Naive thymus-derived CD8-positive, alpha-beta T cell (primary cell): ENCODE measurements at regions of chr12 and their contacts with region 1.

Region 1: GRCh38 chr12:67648521-67649260 is at the start of gene DYRK2:
- DNase-seq: peak; percentile 68 to 89 (median 79)
- ATAC-seq: peak; percentile 51 to 55
- H3K4me3 Mint-ChIP-seq: peak within 1 kb of the TSS; percentile 88 to 99 (median 96)
- H3K27ac Mint-ChIP-seq: peak within 1 kb of the TSS; percentile 92 to 99 (median 98)
- H3K4me1 Mint-ChIP-seq: peaks cover 27 to 49% (median 37%) of the 10 kb centered on the region in 4 donors
- H3K27me3 Mint-ChIP-seq: no peaks in the 10 kb centered on the region
- polyA plus RNA-seq, gene DYRK2: 47.7 to 94.7 (median 62.4) TPM

Region 2: GRCh38 chr12:67355578-67356379 is 292.9 kb before region 1 on chr12:
- POLR2A ChIA-PET with region 1: interaction called, 20 read pairs
- DNase-seq: peak in 8 of 10 donors; percentile 5 to 64 (median 38)
- ATAC-seq: peak; percentile 69 to 85
- H3K4me3 Mint-ChIP-seq: peak overlapping the region in 3 of 10 donors; percentile 13 to 20 (median 15)
- H3K27ac Mint-ChIP-seq: peak overlapping the region in 1 of 10 donors; percentile 68
- H3K4me1 Mint-ChIP-seq: peaks cover 5 to 16% (median 12%) of the 10 kb centered on the region in 4 donors
- H3K27me3 Mint-ChIP-seq: no peaks in the 10 kb centered on the region

Region 3: GRCh38 chr12:67482751-67483671 is 165.7 kb before region 1 on chr12:
- POLR2A ChIA-PET with region 1: interaction called, 26 read pairs
- DNase-seq: peak; percentile 63 to 93 (median 80)
- ATAC-seq: peak; percentile 95
- H3K4me3 Mint-ChIP-seq: peak overlapping the region in 9 of 10 donors; percentile 31 to 57 (median 50)
- H3K27ac Mint-ChIP-seq: peak overlapping the region in 9 of 10 donors; percentile 62 to 96 (median 87)
- H3K4me1 Mint-ChIP-seq: peaks cover 24 to 42% (median 39%) of the 10 kb centered on the region in 4 donors
- H3K27me3 Mint-ChIP-seq: no peaks in the 10 kb centered on the region

Region 4: DNA sequence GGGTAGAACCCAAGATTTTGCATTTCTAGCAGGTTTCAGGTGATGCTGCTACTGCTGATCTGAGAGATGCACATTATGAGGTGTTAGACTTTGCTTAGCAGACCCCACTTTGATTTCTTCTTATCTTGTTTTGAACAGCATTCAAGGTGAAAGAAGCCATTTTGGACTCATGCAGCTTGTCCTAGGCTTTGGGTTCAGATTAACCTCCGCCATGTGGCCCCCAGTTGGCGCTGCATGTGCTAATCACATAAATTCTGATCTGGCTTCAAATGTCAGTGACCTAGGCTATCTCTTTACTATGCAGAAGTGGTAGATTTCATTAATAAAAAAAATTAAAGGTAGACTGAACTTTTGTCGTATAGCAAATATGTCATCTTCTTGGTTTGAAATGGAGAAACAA is 89.9 kb before region 1 on chr12:
- POLR2A ChIA-PET with region 1: interaction called, 23 read pairs
- DNase-seq: no peak
- ATAC-seq: no peak
- H3K4me3 Mint-ChIP-seq: no peak overlapping the region
- H3K27ac Mint-ChIP-seq: no peak overlapping the region
- H3K4me1 Mint-ChIP-seq: peaks cover 0 to 18% (median 8%) of the 10 kb centered on the region in 4 donors
- H3K27me3 Mint-ChIP-seq: no peaks in the 10 kb centered on the region

Region 5: GRCh38 chr12:67592216-67593011 is 56.3 kb before region 1 on chr12:
- POLR2A ChIA-PET with region 1: interaction called, 32 read pairs
- DNase-seq: peak in 2 of 10 donors; percentile 36 to 39
- ATAC-seq: peak in 1 of 2 donors; percentile 26
- H3K4me3 Mint-ChIP-seq: peak overlapping the region in 9 of 10 donors; percentile 3 to 69 (median 44)
- H3K27ac Mint-ChIP-seq: peak overlapping the region; percentile 45 to 92 (median 83)
- H3K4me1 Mint-ChIP-seq: peaks cover 29 to 62% (median 56%) of the 10 kb centered on the region in 4 donors
- H3K27me3 Mint-ChIP-seq: no peaks in the 10 kb centered on the region